ENCODE measurements at regions of chr14 and their contacts with region 1.

Region 1: DNA sequence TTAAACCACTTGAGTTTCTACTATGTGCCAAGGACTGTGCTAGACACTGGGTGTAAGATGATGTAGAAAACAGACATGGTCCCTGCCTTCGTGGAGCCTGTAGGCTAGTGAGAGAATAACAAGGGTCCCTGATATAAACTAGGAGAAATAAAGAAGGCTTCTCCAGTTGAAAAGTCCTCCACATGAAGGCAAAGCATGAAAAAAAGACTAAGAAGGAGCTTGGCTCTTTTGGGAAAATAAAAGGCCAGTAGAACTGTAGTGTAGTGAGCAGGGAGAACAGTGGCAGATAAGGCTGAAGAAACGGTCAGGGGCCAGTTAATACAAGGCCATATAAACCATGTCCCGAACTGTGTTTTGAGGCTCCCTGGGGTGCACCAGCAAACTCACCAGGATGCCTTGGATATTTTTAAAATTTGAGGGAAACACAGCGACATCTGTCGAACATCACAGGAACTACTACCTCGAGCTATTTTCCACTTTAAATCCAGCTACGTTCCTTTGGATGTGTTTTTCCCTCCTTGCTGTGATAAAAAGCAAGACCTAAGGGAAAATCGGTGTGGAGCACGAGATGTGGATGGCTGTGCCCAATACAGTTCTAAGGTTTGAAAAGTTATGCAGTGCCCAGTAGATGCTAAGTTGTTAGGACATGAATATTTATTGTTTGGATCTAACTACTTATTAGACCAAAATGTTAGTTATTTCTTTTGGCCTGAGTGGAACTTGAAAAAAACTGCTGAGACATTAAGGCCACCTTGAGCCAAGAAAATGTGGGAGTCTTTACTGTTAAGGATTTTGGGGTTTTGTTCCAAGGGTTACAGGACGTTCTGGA is 8.5 kb upstream of the CFL2 start:
- DNase-seq: no peak
- H3K4me3 ChIP-seq: no peak overlapping the region
- CTCF ChIP-seq: peak; percentile 67

Region 2: DNA sequence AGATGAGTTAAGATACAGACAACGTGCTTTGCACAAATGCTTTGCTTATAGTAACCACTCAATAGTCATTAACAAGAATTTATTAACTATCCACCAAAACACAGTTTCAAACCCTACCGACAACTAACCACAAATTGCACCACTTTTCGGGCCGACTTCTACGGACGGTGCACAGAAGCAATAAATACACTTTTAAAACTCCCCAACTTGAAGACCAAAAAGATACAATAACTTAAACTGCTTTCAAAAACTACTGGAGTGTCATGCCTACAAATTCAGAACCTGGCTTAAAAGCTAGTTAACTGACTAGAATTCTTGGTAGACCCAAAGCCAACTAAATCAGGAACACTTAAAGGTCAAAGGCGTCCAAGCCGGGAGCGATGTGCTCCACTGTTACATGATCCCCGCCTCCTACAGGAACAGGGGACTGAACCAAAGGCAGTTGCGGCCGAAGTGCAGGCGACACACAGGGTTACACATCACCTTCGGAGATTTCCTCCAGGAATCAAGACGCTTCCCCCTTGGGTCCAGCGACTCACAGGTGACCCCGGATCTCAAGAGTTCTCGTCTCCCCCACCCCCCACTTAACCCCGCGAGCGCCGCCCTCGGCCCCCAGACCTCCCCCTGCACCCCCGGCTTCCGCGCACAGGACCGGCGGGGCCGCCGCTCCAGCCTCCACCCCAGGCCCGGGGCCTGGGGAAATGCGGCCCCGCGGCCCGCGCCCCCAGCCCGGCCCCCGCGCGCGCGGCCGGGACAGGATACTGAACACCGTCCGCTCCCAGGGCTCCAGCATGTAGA is 261.4 kb before region 1 on chr14:
- CTCF ChIA-PET with region 1: no interaction called
- POLR2A ChIA-PET with region 1: no interaction called
- DNase-seq: no peak
- H3K4me3 ChIP-seq: peak overlapping the region; percentile 84
- CTCF ChIP-seq: no peak

Region 3: DNA sequence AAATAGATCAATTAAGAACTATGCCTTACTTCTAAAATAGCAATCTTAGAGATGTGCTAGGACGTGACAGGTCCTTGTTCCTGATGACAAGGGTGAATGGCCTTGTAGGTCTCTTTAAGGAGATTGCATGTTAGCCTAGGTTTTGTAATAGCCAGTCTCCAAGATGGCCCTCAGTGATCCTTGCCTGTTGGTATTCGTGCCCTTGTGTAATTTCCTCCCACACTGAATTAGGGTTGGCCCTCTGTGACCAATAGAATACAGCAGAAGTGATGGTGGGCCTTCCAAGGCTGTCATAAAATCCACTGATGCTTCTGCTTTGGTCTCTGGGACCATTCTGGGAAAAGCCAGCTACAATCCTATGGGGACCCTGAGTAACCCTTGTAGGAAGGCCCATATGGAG is 54.8 kb before region 1 on chr14:
- CTCF ChIA-PET with region 1: interaction called, 111 read pairs
- POLR2A ChIA-PET with region 1: no interaction called
- DNase-seq: no peak
- H3K4me3 ChIP-seq: no peak overlapping the region
- CTCF ChIP-seq: no peak

Region 4: DNA sequence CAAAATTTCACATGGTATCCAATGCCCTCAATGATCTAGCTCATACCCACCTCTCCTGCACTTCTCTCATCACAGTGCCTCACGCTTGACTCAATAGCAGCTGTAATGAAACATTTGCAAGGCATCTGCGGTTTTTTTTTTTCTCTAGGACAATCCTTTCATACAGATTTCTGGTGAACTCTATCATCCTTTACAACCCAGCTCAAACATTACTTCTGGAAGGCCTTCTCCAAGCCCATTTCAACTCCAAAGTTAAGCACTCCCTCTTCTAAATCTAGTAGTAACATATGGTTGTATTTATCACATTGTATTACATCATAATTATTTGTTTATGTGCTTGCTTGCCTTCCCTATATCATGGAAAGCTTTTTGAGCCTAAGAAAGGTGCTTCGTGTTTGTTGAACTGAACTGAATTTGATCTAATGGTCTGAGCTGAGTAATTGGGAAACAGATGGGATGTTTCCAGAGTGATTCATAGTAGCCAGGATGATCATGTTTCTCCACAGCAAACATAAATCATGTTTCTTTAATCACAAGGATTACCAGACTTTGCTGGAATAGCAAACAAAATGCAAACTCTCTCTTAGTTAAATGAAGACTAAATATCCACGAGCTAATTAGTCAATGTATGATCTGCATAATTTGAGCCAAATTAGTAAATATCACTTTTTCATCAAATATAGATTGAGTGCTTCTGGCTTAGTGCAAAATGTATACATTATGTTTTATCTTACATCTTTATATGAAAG is 22.9 kb before region 1 on chr14:
- CTCF ChIA-PET with region 1: interaction called, 10 read pairs
- POLR2A ChIA-PET with region 1: no interaction called
- DNase-seq: no peak
- H3K4me3 ChIP-seq: no peak overlapping the region
- CTCF ChIP-seq: no peak

Region 5: DNA sequence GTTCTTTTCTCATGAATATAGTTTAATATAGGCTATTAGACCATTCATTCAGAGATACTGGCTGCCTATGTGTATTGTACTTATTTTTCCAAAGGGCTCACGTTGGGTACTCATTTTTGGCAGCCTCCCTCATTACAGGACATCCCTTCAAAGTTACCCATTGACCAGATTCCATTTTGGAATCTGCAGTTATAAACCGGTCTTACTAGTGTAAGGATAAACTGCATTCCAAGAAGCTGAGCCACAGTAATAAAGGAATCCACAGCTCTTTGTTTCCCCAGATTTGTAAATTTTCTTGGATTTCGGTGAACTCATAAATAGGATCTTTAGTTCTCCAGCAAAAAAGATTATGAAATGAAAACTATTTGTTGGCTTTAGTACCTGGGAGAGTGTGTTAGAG is 10.3 kb after region 1 on chr14:
- CTCF ChIA-PET with region 1: interaction called, 67 read pairs
- POLR2A ChIA-PET with region 1: no interaction called
- DNase-seq: no peak
- H3K4me3 ChIP-seq: no peak overlapping the region
- CTCF ChIP-seq: no peak

Region 6: GRCh38 chr14:34750670-34751069 is 27.7 kb after region 1 on chr14:
- CTCF ChIA-PET with region 1: interaction called, 17 read pairs
- POLR2A ChIA-PET with region 1: no interaction called
- DNase-seq: peak; percentile 44
- H3K4me3 ChIP-seq: no peak overlapping the region
- CTCF ChIP-seq: no peak

Region 7: GRCh38 chr14:34982417-34983147 is 259.7 kb after region 1 on chr14 and contains the start of gene SRP54:
- CTCF ChIA-PET with region 1: interaction called, 14 read pairs
- POLR2A ChIA-PET with region 1: no interaction called
- DNase-seq: peak; percentile 75
- H3K4me3 ChIP-seq: peak within 1 kb of the TSS; percentile 94
- CTCF ChIP-seq: peak; percentile 41

Measured in AG04449 (cell line).